MCF 10A (cell line): ENCODE measurements at regions of chr1 and their contacts with region 1.

Region 1: GRCh38 chr1:6108937-6109614 is 63.4 kb downstream of the KCNAB2 start:
- DNase-seq: peak; percentile 68
- H3K4me3 Mint-ChIP-seq: no peak overlapping the region
- H3K27ac Mint-ChIP-seq: no peak overlapping the region
- H3K4me1 Mint-ChIP-seq: no peaks in the 10 kb centered on the region
- H3K27me3 Mint-ChIP-seq: peaks cover 25% of the 10 kb centered on the region
- CTCF ChIP-seq: peak; percentile 88

Region 2: GRCh38 chr1:5830771-5831599 is 278.1 kb before region 1 on chr1:
- CTCF ChIA-PET with region 1: no interaction called
- POLR2A ChIA-PET with region 1: no interaction called
- intact Hi-C with region 1: no loop called
- DNase-seq: no peak
- H3K4me3 Mint-ChIP-seq: no peak overlapping the region
- H3K27ac Mint-ChIP-seq: no peak overlapping the region
- H3K4me1 Mint-ChIP-seq: no peaks in the 10 kb centered on the region
- H3K27me3 Mint-ChIP-seq: peaks cover 25% of the 10 kb centered on the region
- CTCF ChIP-seq: no peak

Region 3: GRCh38 chr1:6052543-6053205 is 56.4 kb before region 1 on chr1:
- CTCF ChIA-PET with region 1: interaction called, 4 read pairs
- POLR2A ChIA-PET with region 1: interaction called, 3 read pairs
- intact Hi-C with region 1: loop called (anchors 2 kb)
- DNase-seq: peak; percentile 72
- H3K4me3 Mint-ChIP-seq: no peak overlapping the region
- H3K27ac Mint-ChIP-seq: no peak overlapping the region
- H3K4me1 Mint-ChIP-seq: peaks cover 10% of the 10 kb centered on the region
- H3K27me3 Mint-ChIP-seq: no peaks in the 10 kb centered on the region
- CTCF ChIP-seq: peak; percentile 45

Region 4: GRCh38 chr1:6098303-6099215 is 10.5 kb before region 1 on chr1:
- CTCF ChIA-PET with region 1: no interaction called
- POLR2A ChIA-PET with region 1: no interaction called
- intact Hi-C with region 1: no loop called
- DNase-seq: no peak
- H3K4me3 Mint-ChIP-seq: no peak overlapping the region
- H3K27ac Mint-ChIP-seq: no peak overlapping the region
- H3K4me1 Mint-ChIP-seq: no peaks in the 10 kb centered on the region
- H3K27me3 Mint-ChIP-seq: no peaks in the 10 kb centered on the region
- CTCF ChIP-seq: no peak

Region 5: DNA sequence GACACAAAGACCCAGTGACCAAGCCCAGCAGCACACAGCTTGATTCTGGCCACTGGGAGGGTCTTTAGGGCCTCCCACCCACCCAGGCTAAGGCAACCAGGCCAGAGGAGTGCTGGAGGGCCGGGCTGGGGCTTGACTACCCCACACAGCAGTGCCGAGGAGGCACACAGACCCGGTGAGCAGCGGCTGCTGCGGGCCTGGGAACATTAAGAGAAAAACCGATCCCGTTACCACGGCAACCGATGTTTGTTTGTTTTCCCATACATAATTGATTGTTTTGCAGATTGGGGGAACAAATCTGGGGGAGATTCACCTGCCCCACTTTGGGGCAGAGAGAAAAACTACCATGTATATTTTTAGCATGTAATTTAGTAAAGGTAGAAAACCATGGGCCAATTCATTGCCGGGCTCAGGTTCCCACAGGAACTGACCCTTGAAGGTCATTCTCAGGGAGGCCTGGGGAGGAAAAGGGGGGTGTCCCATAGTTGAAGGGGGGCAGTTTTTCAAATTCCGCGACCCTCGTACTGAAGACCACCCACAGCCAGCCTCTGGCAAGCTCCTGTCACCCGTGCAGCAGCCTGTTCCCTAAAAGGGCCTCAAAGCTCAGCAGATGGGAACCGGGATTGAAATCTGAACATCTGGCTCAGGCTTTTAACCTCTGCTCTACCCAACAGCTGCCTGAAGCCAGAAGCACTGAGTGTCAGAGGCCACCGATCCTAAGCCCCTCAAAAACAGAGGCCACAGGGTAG is 35.7 kb after region 1 on chr1:
- CTCF ChIA-PET with region 1: no interaction called
- POLR2A ChIA-PET with region 1: no interaction called
- intact Hi-C with region 1: no loop called
- DNase-seq: no peak
- H3K4me3 Mint-ChIP-seq: no peak overlapping the region
- H3K27ac Mint-ChIP-seq: no peak overlapping the region
- H3K4me1 Mint-ChIP-seq: peaks cover 6% of the 10 kb centered on the region
- H3K27me3 Mint-ChIP-seq: no peaks in the 10 kb centered on the region
- CTCF ChIP-seq: no peak

Region 6: GRCh38 chr1:6171548-6172119 is 62.6 kb after region 1 on chr1:
- CTCF ChIA-PET with region 1: no interaction called
- POLR2A ChIA-PET with region 1: no interaction called
- intact Hi-C with region 1: loop called (anchors 1 kb)
- DNase-seq: peak; percentile 48
- H3K4me3 Mint-ChIP-seq: no peak overlapping the region
- H3K27ac Mint-ChIP-seq: no peak overlapping the region
- H3K4me1 Mint-ChIP-seq: no peaks in the 10 kb centered on the region
- H3K27me3 Mint-ChIP-seq: peaks cover 23% of the 10 kb centered on the region
- CTCF ChIP-seq: peak; percentile 20

Region 7: GRCh38 chr1:6185635-6186382 is 76.7 kb after region 1 on chr1:
- CTCF ChIA-PET with region 1: interaction called, 11 read pairs
- POLR2A ChIA-PET with region 1: no interaction called
- intact Hi-C with region 1: loop called (anchors 1 kb)
- DNase-seq: peak; percentile 49
- H3K4me3 Mint-ChIP-seq: no peak overlapping the region
- H3K27ac Mint-ChIP-seq: no peak overlapping the region
- H3K4me1 Mint-ChIP-seq: peaks cover 6% of the 10 kb centered on the region
- H3K27me3 Mint-ChIP-seq: peaks cover 12% of the 10 kb centered on the region
- CTCF ChIP-seq: peak; percentile 38

Region 8: DNA sequence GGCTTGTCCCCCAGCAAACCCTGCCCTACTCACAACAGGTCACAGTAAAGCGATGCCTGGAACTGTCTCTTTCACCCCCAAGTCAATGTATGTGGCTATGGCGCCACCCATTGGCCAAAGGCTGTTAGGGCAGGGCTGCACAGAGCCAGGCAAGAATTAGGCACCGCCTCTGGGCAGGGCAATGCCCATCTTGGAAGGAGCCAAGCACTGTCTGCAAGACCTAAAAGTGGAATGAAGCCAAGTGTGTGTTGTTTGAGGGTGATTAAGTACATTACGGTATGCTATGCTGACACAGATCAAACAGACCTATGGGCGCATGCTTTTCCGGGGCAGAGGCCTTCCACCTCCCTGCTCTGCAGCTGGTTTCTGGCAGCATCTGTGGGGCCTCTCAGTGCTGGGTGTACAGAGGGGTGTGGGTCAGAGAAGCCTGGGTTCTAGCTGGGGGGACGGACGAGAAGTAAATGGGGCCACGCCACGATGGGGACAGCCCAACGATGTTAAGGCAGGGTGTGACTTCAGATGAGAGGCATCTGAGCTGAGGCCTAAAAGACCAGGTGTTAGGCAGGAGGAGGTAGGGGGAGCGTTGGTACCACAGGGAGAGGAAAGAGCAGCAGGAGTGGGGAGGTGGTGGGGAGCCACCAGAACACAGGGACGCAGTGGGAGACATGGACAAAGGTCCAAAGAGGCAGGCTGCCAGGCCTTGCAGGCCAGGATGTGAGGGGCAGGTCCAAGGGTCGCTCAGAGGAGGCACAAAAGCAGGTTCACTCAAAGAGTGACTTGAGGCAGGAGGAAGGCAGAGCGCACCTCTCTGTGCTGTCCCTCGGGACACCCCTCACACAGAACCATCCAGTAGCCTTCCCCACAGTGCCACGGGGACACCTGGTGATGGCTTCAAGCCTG is 234.7 kb after region 1 on chr1:
- CTCF ChIA-PET with region 1: interaction called, 3 read pairs
- POLR2A ChIA-PET with region 1: no interaction called
- intact Hi-C with region 1: loop called (anchors 5 kb)
- DNase-seq: peak; percentile 98
- H3K4me3 Mint-ChIP-seq: no peak overlapping the region
- H3K27ac Mint-ChIP-seq: peak overlapping the region; percentile 68
- H3K4me1 Mint-ChIP-seq: peaks cover 15% of the 10 kb centered on the region
- H3K27me3 Mint-ChIP-seq: no peaks in the 10 kb centered on the region
- CTCF ChIP-seq: peak; percentile 93

Region 9: DNA sequence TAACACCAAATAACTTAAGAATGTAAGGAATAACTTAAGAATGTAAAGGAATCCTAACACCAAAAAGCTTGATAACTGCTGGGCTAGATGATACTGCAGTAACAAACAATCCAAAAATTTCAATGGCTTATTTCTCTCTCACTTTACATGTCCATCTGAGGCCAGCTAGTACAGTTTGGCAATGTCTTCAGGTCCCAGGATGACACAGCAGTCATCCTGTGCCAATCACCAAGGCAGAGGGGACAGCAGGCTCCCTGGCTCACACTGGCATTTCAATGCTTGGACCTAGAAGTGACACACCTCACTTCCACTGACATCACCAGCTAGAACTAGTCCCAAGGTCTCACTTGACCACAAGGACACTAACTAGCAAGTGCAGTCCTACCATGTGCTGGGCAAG is 577.2 kb after region 1 on chr1:
- CTCF ChIA-PET with region 1: no interaction called
- POLR2A ChIA-PET with region 1: no interaction called
- intact Hi-C with region 1: no loop called
- DNase-seq: no peak
- H3K4me3 Mint-ChIP-seq: no peak overlapping the region
- H3K27ac Mint-ChIP-seq: no peak overlapping the region
- H3K4me1 Mint-ChIP-seq: peaks cover 8% of the 10 kb centered on the region
- H3K27me3 Mint-ChIP-seq: no peaks in the 10 kb centered on the region
- CTCF ChIP-seq: no peak